AG04449 (cell line): ENCODE measurements at regions of chr19 and their contacts with region 1.

Region 1: GRCh38 chr19:38229585-38230073 is 5.6 kb upstream of the DPF1 start:
- DNase-seq: no peak
- H3K4me3 ChIP-seq: peak overlapping the region; percentile 62
- CTCF ChIP-seq: peak; percentile 18

Region 2: GRCh38 chr19:38079926-38080380 is 149.7 kb before region 1 on chr19:
- CTCF ChIA-PET with region 1: no interaction called
- POLR2A ChIA-PET with region 1: no interaction called
- DNase-seq: peak; percentile 70
- H3K4me3 ChIP-seq: no peak overlapping the region
- CTCF ChIP-seq: no peak

Region 3: DNA sequence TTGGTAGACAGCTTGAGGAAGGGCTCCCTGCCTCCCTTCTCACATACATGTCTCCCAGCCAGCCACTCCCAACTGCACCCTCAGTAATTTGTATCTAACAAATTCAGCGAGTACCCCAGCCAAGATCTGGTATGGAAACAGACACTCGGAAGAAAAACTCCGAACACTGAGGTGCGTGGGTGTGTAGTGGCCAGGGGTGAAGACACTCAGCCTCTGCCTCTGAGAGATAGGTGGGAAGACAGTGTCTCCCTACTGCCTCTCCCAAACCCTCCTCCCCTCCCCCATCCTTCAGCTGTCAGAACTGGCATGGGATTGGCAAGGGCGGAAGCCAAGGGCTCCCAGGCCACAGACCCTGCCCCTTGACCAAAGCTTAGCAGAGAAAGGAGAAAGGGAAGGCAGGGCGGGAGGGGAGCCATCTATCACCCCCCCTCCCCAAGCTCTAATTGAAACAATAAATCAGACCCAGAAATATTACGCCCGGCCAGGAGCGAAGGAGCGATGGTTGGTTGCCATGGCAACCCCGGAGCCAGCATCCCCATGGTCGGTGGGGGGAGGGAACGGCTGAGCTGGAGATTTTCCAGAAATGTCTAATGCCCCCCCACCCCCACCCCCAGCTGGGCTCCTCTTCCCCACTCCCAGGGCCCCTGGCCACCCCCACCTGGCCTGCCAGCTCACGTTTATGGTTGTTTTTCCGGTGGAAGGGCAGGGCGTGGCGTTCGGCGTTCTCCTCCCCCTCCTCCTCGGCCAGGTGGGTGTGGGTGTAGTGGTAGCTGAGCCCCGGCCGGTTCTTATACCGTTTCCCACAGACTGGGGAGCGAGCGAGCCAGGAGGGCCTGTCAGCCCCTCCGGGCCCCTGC is 12.6 kb before region 1 on chr19:
- CTCF ChIA-PET with region 1: interaction called, 11 read pairs
- POLR2A ChIA-PET with region 1: no interaction called
- DNase-seq: no peak
- H3K4me3 ChIP-seq: no peak overlapping the region
- CTCF ChIP-seq: no peak

Region 4: DNA sequence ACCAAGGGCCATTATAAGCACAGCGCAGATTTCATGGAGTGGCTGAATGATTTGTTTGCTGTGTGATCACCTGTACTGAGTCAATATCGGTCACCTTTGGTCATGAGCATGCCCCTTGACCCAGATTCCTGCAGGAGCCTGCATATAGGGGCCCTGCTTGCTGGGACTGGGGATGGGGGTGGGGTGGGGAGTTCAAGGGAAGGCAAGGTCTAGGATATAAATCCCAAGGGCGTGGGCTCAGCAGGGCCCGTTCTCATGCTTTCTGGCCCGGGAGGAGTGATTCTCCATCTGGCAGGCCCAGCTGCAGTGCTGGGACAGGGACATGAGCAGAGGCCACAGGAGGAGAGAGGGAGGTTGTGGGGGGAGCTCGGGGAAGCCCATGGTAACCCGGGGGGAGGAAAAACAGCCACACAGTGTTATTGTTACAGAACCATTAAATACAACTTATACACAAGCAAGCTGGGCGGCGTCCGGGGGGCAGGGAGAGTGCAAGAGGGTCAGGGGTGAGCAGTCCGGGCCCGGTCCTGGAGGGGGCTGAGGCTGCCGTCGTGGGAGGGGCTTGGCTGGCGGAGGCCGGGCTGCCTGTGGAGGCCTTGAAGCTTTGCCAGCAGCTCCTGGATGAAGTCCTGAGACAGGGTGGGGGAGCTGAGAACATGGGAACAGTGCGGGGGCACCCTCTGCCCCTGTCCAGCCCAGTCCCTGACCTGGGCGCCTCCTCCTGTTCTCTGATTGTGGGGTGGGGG is 21.4 kb after region 1 on chr19:
- CTCF ChIA-PET with region 1: interaction called, 93 read pairs
- POLR2A ChIA-PET with region 1: no interaction called
- DNase-seq: no peak
- H3K4me3 ChIP-seq: no peak overlapping the region
- CTCF ChIP-seq: no peak

Region 5: DNA sequence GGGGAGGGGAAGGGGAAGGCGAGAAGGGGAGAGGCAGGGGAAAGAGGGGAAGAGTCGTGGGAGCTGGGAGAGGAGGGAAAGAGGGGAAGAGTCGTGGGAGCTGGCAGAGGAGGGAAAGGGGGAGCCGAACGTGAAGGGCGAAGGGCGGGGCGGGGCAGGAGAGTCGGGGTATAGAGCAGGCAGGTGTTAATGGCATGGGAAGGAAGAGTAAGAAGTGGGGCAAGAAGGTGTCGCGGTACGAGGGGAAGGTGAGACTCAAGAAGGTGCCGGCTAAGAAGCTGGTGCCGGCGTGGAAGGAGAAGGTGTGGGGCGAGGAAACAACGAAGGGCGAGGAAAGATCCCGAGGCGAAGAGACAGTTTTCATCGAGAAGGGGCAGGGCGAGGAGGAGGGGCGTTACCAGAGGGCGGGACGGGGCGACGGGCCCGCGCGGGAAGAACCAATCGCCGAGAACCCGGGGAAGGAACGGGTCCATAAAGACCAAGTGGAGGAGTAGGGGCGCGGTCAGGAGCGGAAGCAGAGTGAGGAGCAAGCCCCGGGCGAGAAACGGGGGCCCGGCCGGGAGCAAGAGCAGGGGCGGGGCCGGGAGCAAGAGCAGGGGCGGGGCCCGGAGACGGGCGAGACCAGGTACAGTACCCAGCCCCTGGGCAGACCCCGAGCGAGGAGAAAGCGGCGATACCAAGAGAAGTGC is 106.5 kb after region 1 on chr19:
- CTCF ChIA-PET with region 1: interaction called, 94 read pairs
- POLR2A ChIA-PET with region 1: no interaction called
- DNase-seq: peak; percentile 44
- H3K4me3 ChIP-seq: peak overlapping the region; percentile 89
- CTCF ChIP-seq: no peak

Region 6: GRCh38 chr19:38374429-38375176 is 145.0 kb after region 1 on chr19 and contains the start of gene PSMD8:
- CTCF ChIA-PET with region 1: interaction called, 13 read pairs
- POLR2A ChIA-PET with region 1: no interaction called
- DNase-seq: peak; percentile 86
- H3K4me3 ChIP-seq: peak within 1 kb of the TSS; percentile 83
- CTCF ChIP-seq: peak; percentile 36

Region 7: DNA sequence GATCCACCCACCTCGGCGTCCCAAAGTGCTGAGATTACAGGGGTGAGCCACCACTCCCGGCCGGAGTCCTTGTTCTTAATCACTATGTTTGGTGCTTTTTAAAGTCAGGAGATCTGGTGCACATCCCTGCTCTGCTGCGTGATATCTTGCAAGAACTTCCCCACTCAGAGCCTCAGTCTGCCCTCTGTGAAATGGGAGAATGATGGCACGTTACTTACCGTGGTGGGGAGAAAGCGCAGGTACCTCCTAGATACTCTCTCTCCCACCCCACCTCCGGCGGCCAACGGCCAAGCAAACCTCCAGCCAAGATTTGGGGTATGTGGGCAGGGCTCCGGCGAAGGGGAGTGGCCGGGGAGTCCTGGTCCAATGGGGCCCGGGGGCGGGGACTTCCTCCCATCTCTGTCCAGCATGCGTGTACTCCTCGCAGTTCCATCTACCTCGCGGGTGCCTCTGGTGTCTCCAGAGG is 203.7 kb after region 1 on chr19 and contains the start of gene RYR1:
- CTCF ChIA-PET with region 1: no interaction called
- POLR2A ChIA-PET with region 1: no interaction called
- DNase-seq: no peak
- H3K4me3 ChIP-seq: no peak within 1 kb of the TSS
- CTCF ChIP-seq: no peak